Caco-2 (cell line): ENCODE measurements at regions of chr6 and their contacts with region 1.

Region 1: DNA sequence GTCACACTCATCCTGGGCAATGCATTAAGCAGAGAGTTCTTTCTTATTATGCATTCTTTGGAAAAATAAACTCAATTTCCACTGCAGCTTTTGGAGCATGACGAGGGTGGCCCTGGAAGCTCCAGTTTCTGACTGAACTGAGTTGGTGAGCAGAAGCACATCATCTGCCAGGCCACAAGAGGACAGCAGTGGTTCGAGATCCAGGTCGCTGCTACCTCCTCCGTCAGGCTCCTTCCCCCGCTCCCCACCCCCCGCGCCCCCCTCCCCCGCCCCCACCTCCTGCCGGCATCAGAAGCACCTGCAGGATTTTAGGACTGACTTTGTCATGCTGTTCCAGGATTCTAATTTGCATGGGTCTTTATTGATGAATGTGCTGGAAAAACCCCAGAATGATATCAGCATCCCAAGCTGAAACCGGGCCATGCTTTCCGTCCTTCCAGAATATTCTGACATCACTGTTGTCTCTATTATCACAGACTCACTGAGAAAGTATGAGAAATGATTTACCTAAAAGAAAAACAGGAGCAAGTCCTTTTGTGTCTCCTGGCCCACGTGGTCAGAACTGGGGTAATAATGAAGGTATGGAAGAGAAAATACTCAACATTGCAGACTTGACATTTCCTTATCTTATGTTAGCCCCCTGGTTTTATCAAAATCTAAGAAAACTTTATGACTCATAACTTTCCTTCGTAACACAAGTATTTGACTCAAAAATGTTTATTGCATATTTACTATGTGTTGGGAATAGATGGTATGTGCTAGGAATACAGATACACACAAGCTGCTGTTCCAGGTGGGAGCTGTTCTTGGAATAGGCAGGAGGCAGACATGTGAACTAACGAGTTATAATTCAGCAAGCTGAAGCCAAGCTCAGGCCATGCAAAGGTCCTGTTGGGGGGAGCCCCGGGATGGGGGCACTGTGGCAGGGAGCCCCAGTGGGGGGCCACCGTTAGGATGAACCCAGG is 220.2 kb upstream of the EXOC2 start:
- DNase-seq: peak; percentile 71 to 79
- H3K4me3 ChIP-seq: no peak overlapping the region
- H3K4me3 Mint-ChIP-seq: no peak overlapping the region
- H3K27ac Mint-ChIP-seq: no peak overlapping the region
- H3K4me1 ChIP-seq: peaks cover 12% of the 10 kb centered on the region
- H3K4me1 Mint-ChIP-seq: no peaks in the 10 kb centered on the region
- H3K27me3 ChIP-seq: no peaks in the 10 kb centered on the region
- H3K27me3 Mint-ChIP-seq: no peaks in the 10 kb centered on the region
- CTCF ChIP-seq: peak; percentile 80 to 91

Region 2: GRCh38 chr6:797479-798077 is 115.6 kb before region 1 on chr6:
- CTCF ChIA-PET with region 1: no interaction called
- POLR2A ChIA-PET with region 1: no interaction called
- intact Hi-C with region 1: loop called (anchors 5 kb)
- DNase-seq: peak in 1 of 2 experiments; percentile 60
- H3K4me3 ChIP-seq: no peak overlapping the region
- H3K4me3 Mint-ChIP-seq: no peak overlapping the region
- H3K27ac Mint-ChIP-seq: no peak overlapping the region
- H3K4me1 ChIP-seq: no peaks in the 10 kb centered on the region
- H3K4me1 Mint-ChIP-seq: no peaks in the 10 kb centered on the region
- H3K27me3 ChIP-seq: no peaks in the 10 kb centered on the region
- H3K27me3 Mint-ChIP-seq: no peaks in the 10 kb centered on the region
- CTCF ChIP-seq: peak; percentile 73 to 74

Region 3: DNA sequence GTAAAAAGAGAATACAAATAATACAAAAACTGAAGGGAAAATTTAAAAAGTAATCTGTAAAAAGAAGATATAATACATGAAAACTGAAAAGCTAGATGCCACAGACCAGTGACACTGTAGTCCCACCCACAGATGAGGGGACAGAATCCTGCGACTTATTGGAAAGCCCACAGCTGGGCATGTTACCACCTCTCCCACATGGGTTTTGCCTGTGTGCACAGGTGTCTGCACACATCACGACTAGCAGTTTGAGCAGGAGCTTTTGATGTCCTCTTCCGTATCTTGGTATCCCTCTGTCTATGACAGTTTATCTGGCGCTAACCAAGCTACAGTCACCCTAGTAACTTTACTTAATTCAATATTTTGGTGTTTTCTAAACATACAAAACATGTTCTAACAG is 70.9 kb after region 1 on chr6:
- CTCF ChIA-PET with region 1: no interaction called
- POLR2A ChIA-PET with region 1: no interaction called
- intact Hi-C with region 1: no loop called
- DNase-seq: no peak
- H3K4me3 ChIP-seq: no peak overlapping the region
- H3K4me3 Mint-ChIP-seq: no peak overlapping the region
- H3K27ac Mint-ChIP-seq: no peak overlapping the region
- H3K4me1 ChIP-seq: 0 out of 2 replicates have a peak, but pooled peaks cover 3% of the 10 kb centered on the region
- H3K4me1 Mint-ChIP-seq: no peaks in the 10 kb centered on the region
- H3K27me3 ChIP-seq: no peaks in the 10 kb centered on the region
- H3K27me3 Mint-ChIP-seq: no peaks in the 10 kb centered on the region
- CTCF ChIP-seq: no peak

Region 4: GRCh38 chr6:1131285-1132079 is 218.3 kb after region 1 on chr6:
- CTCF ChIA-PET with region 1: no interaction called
- POLR2A ChIA-PET with region 1: no interaction called
- intact Hi-C with region 1: loop called (anchors 2 kb)
- DNase-seq: no peak
- H3K4me3 ChIP-seq: no peak overlapping the region
- H3K4me3 Mint-ChIP-seq: no peak overlapping the region
- H3K27ac Mint-ChIP-seq: no peak overlapping the region
- H3K4me1 ChIP-seq: peaks cover 7% of the 10 kb centered on the region; the same call in 1 of the 2 replicates
- H3K4me1 Mint-ChIP-seq: peaks cover 8% of the 10 kb centered on the region
- H3K27me3 ChIP-seq: no peaks in the 10 kb centered on the region
- H3K27me3 Mint-ChIP-seq: no peaks in the 10 kb centered on the region
- CTCF ChIP-seq: no peak

Region 5: GRCh38 chr6:1263039-1263849 is 350.1 kb after region 1 on chr6:
- CTCF ChIA-PET with region 1: interaction called, 5 read pairs
- POLR2A ChIA-PET with region 1: no interaction called
- intact Hi-C with region 1: loop called (anchors 10 kb)
- DNase-seq: peak; percentile 82 to 83
- H3K4me3 ChIP-seq: no peak overlapping the region
- H3K4me3 Mint-ChIP-seq: peak overlapping the region; percentile 73
- H3K27ac Mint-ChIP-seq: peak overlapping the region; percentile 100
- H3K4me1 ChIP-seq: peaks cover 67% of the 10 kb centered on the region
- H3K4me1 Mint-ChIP-seq: peaks cover 30% of the 10 kb centered on the region
- H3K27me3 ChIP-seq: no peaks in the 10 kb centered on the region
- H3K27me3 Mint-ChIP-seq: no peaks in the 10 kb centered on the region
- CTCF ChIP-seq: peak in 1 of 2 experiments; percentile 35

Region 6: GRCh38 chr6:1335367-1336037 is 422.3 kb after region 1 on chr6:
- CTCF ChIA-PET with region 1: interaction called, 27 read pairs
- POLR2A ChIA-PET with region 1: interaction called, 4 read pairs
- intact Hi-C with region 1: loop called (anchors 1 kb)
- DNase-seq: peak; percentile 90 to 94
- H3K4me3 ChIP-seq: no peak overlapping the region
- H3K4me3 Mint-ChIP-seq: peak overlapping the region; percentile 53
- H3K27ac Mint-ChIP-seq: peak overlapping the region; percentile 74
- H3K4me1 ChIP-seq: peaks cover 26% of the 10 kb centered on the region
- H3K4me1 Mint-ChIP-seq: peaks cover 24% of the 10 kb centered on the region
- H3K27me3 ChIP-seq: no peaks in the 10 kb centered on the region
- H3K27me3 Mint-ChIP-seq: no peaks in the 10 kb centered on the region
- CTCF ChIP-seq: no peak